B cell (primary cell): ENCODE measurements at regions of chr10 and their contacts with region 1.

Region 1: GRCh38 chr10:95841661-95842498 is 65.9 kb upstream of the CC2D2B start:
- DNase-seq: peak; percentile 85
- ATAC-seq: peak; percentile 42
- H3K4me3 ChIP-seq: peak overlapping the region in 2 of 5 experiments; percentile 23 to 48
- H3K4me3 Mint-ChIP-seq: peak overlapping the region; percentile 79
- H3K27ac ChIP-seq: peak overlapping the region; percentile 59 to 89
- H3K27ac Mint-ChIP-seq: peak overlapping the region; percentile 94
- H3K4me1 ChIP-seq: peaks cover 52 to 55% of the 10 kb centered on the region in 2 donors
- H3K4me1 Mint-ChIP-seq: peaks cover 48% of the 10 kb centered on the region
- H3K27me3 ChIP-seq: no peaks in the 10 kb centered on the region
- H3K27me3 Mint-ChIP-seq: no peaks in the 10 kb centered on the region
- CTCF ChIP-seq: peak; percentile 96

Region 2: DNA sequence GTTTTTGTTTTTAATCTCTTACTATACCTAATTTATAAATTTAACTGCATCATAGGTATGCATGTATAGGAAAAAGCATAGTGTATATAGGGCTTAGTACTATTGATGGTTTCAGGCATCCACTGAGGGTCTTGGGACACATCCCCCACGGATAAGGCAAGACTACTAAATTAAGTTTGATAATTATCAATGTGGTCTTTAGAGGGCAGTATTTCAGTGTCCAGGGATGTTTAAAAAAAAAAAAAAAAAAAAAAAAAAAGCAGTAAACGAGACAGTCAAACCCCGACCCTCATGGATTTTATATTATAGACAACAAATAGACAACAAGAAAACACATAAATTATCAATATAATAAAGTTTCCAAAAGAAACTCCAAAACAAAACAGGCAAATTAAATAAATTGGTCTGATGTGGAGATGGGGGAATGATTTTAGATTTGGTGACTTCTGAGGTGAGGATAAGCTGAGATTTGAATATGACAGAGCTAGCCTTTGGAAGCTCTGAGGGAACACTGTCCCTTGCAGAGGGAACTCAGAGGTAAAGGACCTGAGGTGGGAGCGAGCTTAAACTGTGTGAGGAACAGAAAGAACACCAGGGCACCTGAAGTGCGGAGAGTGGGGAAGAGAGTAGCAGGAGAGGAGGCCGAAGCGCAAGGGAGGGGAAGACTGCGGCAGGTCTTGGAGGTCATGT is 633.0 kb before region 1 on chr10:
- CTCF ChIA-PET with region 1: no interaction called
- POLR2A ChIA-PET with region 1: no interaction called
- intact Hi-C with region 1: no loop called
- DNase-seq: peak; percentile 29
- ATAC-seq: no peak
- H3K4me3 ChIP-seq: no peak overlapping the region
- H3K4me3 Mint-ChIP-seq: no peak overlapping the region
- H3K27ac ChIP-seq: no peak overlapping the region
- H3K27ac Mint-ChIP-seq: no peak overlapping the region
- H3K4me1 ChIP-seq: no peaks in the 10 kb centered on the region
- H3K4me1 Mint-ChIP-seq: no peaks in the 10 kb centered on the region
- H3K27me3 ChIP-seq: no peaks in the 10 kb centered on the region
- H3K27me3 Mint-ChIP-seq: no peaks in the 10 kb centered on the region
- CTCF ChIP-seq: peak; percentile 62

Region 3: DNA sequence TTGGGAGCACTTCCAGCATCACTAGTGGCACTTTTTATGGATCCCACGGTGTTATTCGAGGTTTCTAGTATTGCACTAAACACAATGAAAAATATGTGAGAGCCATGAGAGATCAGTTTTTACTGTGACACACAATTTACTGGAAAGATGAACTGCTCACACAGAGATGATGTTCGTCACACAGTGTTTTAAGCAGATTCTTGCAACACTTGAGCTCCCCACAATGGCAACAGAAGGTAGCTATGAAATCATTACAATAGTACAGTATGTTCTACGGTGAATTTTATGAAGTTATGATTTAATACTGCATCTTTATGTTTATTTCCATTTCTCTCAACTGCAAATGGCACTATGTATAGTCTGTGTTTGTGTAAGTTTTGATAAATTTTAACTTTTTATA is 113.4 kb before region 1 on chr10:
- CTCF ChIA-PET with region 1: interaction called, 34 read pairs
- POLR2A ChIA-PET with region 1: interaction called, 3 read pairs
- intact Hi-C with region 1: no loop called
- DNase-seq: no peak
- ATAC-seq: peak; percentile 68
- H3K4me3 ChIP-seq: no peak overlapping the region
- H3K4me3 Mint-ChIP-seq: no peak overlapping the region
- H3K27ac ChIP-seq: no peak overlapping the region
- H3K27ac Mint-ChIP-seq: peak overlapping the region; percentile 56
- H3K4me1 ChIP-seq: peaks cover 22 to 25% of the 10 kb centered on the region in 2 donors
- H3K4me1 Mint-ChIP-seq: peaks cover 36% of the 10 kb centered on the region
- H3K27me3 ChIP-seq: no peaks in the 10 kb centered on the region
- H3K27me3 Mint-ChIP-seq: no peaks in the 10 kb centered on the region
- CTCF ChIP-seq: no peak

Region 4: GRCh38 chr10:95741807-95742467 is 99.9 kb before region 1 on chr10:
- CTCF ChIA-PET with region 1: interaction called, 109 read pairs
- POLR2A ChIA-PET with region 1: interaction called, 3 read pairs
- intact Hi-C with region 1: loop called (anchors 1 kb)
- DNase-seq: peak; percentile 79
- ATAC-seq: peak; percentile 84
- H3K4me3 ChIP-seq: peak overlapping the region; percentile 7 to 63 (median 49)
- H3K4me3 Mint-ChIP-seq: peak overlapping the region; percentile 90
- H3K27ac ChIP-seq: peak overlapping the region; percentile 76 to 78
- H3K27ac Mint-ChIP-seq: peak overlapping the region; percentile 98
- H3K4me1 ChIP-seq: peaks cover 44 to 48% of the 10 kb centered on the region in 2 donors
- H3K4me1 Mint-ChIP-seq: peaks cover 55% of the 10 kb centered on the region
- H3K27me3 ChIP-seq: no peaks in the 10 kb centered on the region
- H3K27me3 Mint-ChIP-seq: no peaks in the 10 kb centered on the region
- CTCF ChIP-seq: peak; percentile 66

Region 5: GRCh38 chr10:95783741-95784140 is 58.1 kb before region 1 on chr10:
- CTCF ChIA-PET with region 1: interaction called, 15 read pairs
- POLR2A ChIA-PET with region 1: interaction called, 3 read pairs
- intact Hi-C with region 1: loop called (anchors 2 kb)
- DNase-seq: peak; percentile 84
- ATAC-seq: peak; percentile 52
- H3K4me3 ChIP-seq: peak overlapping the region in 1 of 5 experiments; percentile 13
- H3K4me3 Mint-ChIP-seq: peak overlapping the region; percentile 38
- H3K27ac ChIP-seq: peak overlapping the region; percentile 92 to 96
- H3K27ac Mint-ChIP-seq: peak overlapping the region; percentile 92
- H3K4me1 ChIP-seq: peaks cover 75 to 76% of the 10 kb centered on the region in 2 donors
- H3K4me1 Mint-ChIP-seq: peaks cover 90% of the 10 kb centered on the region
- H3K27me3 ChIP-seq: no peaks in the 10 kb centered on the region
- H3K27me3 Mint-ChIP-seq: no peaks in the 10 kb centered on the region
- CTCF ChIP-seq: no peak

Region 6: DNA sequence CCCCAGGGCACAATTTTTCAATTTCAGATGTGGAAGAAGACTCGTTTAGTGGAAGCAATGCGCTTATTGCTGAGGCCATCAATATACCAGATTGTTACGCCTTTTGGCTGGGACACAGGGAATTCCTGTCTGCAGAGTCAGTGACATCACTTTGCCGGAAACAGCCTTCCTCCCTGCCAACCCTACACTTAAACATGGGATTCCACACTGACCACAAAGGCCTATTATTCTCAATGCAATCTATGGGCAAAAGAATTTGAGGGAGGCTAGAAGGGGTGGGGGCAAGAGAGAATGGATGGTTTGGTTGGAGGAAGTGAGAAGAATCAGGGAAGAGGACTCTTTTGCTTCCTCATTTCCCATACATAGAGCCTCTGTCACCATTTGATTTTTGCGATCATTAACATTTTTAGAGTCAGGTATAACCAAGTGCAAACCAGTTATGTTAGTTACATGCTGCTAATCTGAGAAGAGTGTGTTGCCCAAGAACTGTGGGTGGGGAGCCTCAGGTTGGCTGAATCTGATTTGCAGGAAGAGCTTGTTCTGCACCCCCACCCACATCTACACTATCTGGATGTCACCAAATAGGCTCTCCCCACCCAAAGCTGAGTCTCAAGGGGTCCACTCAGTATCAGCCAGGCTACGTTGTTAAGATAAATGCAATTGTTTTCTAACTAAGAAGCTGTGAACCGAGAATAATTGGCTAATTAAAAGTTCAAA is 27.7 kb before region 1 on chr10:
- CTCF ChIA-PET with region 1: interaction called, 18 read pairs
- POLR2A ChIA-PET with region 1: no interaction called
- intact Hi-C with region 1: no loop called
- DNase-seq: no peak
- ATAC-seq: peak; percentile 45
- H3K4me3 ChIP-seq: no peak overlapping the region
- H3K4me3 Mint-ChIP-seq: peak overlapping the region; percentile 52
- H3K27ac ChIP-seq: no peak overlapping the region
- H3K27ac Mint-ChIP-seq: peak overlapping the region; percentile 28
- H3K4me1 ChIP-seq: peaks cover 27 to 46% of the 10 kb centered on the region in 2 donors
- H3K4me1 Mint-ChIP-seq: peaks cover 67% of the 10 kb centered on the region
- H3K27me3 ChIP-seq: no peaks in the 10 kb centered on the region
- H3K27me3 Mint-ChIP-seq: no peaks in the 10 kb centered on the region
- CTCF ChIP-seq: no peak

Region 7: DNA sequence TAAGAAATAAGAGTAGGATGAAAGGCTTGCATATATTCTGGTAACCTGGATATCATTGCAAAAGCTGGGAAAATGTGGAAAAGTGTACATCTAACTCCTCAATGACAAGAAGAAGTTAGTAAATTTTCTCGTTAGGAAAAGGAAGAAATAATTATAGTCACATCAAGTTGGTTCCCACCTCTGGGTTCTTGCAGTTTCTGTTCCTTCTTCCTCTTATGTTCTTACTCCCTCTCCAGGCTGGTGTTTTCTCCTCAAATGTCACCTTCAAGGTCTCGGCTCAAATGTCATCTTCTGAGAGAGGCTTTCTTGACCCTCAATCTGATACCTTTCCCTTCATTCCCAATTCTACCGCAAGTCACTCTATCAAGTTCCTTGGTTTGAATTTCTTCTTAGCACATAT is 21.5 kb before region 1 on chr10:
- CTCF ChIA-PET with region 1: interaction called, 24 read pairs
- POLR2A ChIA-PET with region 1: interaction called, 4 read pairs
- intact Hi-C with region 1: loop called (anchors 2 kb)
- DNase-seq: peak; percentile 71
- ATAC-seq: peak; percentile 75
- H3K4me3 ChIP-seq: peak overlapping the region in 1 of 5 experiments; percentile 21
- H3K4me3 Mint-ChIP-seq: peak overlapping the region; percentile 75
- H3K27ac ChIP-seq: peak overlapping the region; percentile 59 to 74
- H3K27ac Mint-ChIP-seq: peak overlapping the region; percentile 89
- H3K4me1 ChIP-seq: peaks cover 29 to 43% of the 10 kb centered on the region in 2 donors
- H3K4me1 Mint-ChIP-seq: peaks cover 72% of the 10 kb centered on the region
- H3K27me3 ChIP-seq: no peaks in the 10 kb centered on the region
- H3K27me3 Mint-ChIP-seq: no peaks in the 10 kb centered on the region
- CTCF ChIP-seq: no peak

Region 8: DNA sequence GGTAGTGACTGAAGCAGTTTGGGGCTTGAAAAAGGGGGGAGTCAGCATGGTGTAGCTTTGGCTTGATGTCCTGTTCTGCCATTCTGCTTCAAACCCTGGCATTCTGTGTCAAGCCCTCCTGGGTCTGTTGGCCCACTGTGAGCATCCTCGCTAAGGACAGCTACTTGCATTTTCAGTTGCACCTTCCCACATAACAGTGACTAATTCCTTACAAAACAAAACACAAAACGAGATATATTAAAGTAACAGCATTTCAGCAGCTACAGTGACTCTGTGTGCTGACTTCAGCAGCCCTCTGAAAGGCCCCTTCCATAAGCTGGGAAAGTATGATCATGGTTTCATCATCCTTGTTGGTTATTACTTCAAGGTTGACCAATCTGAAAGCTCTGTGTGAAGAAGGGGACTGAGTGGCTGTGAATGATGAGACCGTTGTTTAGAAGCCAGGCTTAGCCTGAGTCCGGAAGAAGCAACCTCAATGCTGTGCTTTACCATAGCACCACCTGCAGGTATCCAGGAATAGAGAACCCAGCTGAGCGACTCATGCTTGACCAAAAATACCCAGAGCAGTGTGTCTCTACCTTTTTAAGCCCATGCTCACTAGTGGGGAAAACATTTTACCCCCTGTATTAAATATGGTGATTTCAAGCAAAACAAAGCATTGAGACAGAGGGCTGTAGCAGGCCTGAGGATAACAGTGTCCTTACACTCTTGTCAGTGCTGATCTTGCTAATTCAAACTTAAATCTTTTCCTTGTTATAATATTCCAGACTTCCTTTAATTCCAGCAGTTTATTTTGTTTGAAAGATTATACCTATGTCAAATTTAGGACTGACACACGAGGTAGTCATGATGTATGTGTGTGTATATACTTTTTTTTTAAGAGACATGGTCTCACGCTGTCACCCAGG is 23.3 kb after region 1 on chr10:
- CTCF ChIA-PET with region 1: interaction called, 123 read pairs
- POLR2A ChIA-PET with region 1: interaction called, 7 read pairs
- intact Hi-C with region 1: loop called (anchors 1 kb)
- DNase-seq: peak; percentile 83
- ATAC-seq: peak; percentile 99
- H3K4me3 ChIP-seq: no peak overlapping the region
- H3K4me3 Mint-ChIP-seq: no peak overlapping the region
- H3K27ac ChIP-seq: peak overlapping the region; percentile 26 to 75
- H3K27ac Mint-ChIP-seq: peak overlapping the region; percentile 88
- H3K4me1 ChIP-seq: peaks cover 11 to 13% of the 10 kb centered on the region in 2 donors
- H3K4me1 Mint-ChIP-seq: peaks cover 23% of the 10 kb centered on the region
- H3K27me3 ChIP-seq: no peaks in the 10 kb centered on the region
- H3K27me3 Mint-ChIP-seq: no peaks in the 10 kb centered on the region
- CTCF ChIP-seq: peak; percentile 88

Region 9: GRCh38 chr10:96401036-96401435 is 559.2 kb after region 1 on chr10:
- CTCF ChIA-PET with region 1: no interaction called
- POLR2A ChIA-PET with region 1: no interaction called
- intact Hi-C with region 1: no loop called
- DNase-seq: no peak
- ATAC-seq: no peak
- H3K4me3 ChIP-seq: no peak overlapping the region
- H3K4me3 Mint-ChIP-seq: no peak overlapping the region
- H3K27ac ChIP-seq: no peak overlapping the region
- H3K27ac Mint-ChIP-seq: no peak overlapping the region
- H3K4me1 ChIP-seq: peaks cover 0 to 3% of the 10 kb centered on the region in 2 donors
- H3K4me1 Mint-ChIP-seq: peaks cover 1% of the 10 kb centered on the region
- H3K27me3 ChIP-seq: peaks cover 0 to 13% (median 4%) of the 10 kb centered on the region in 4 experiments
- H3K27me3 Mint-ChIP-seq: peaks cover 41% of the 10 kb centered on the region
- CTCF ChIP-seq: no peak